Heart left ventricle (tissue), 16 donors: ENCODE measurements at regions of chr1 and their contacts with region 1.

Region 1: DNA sequence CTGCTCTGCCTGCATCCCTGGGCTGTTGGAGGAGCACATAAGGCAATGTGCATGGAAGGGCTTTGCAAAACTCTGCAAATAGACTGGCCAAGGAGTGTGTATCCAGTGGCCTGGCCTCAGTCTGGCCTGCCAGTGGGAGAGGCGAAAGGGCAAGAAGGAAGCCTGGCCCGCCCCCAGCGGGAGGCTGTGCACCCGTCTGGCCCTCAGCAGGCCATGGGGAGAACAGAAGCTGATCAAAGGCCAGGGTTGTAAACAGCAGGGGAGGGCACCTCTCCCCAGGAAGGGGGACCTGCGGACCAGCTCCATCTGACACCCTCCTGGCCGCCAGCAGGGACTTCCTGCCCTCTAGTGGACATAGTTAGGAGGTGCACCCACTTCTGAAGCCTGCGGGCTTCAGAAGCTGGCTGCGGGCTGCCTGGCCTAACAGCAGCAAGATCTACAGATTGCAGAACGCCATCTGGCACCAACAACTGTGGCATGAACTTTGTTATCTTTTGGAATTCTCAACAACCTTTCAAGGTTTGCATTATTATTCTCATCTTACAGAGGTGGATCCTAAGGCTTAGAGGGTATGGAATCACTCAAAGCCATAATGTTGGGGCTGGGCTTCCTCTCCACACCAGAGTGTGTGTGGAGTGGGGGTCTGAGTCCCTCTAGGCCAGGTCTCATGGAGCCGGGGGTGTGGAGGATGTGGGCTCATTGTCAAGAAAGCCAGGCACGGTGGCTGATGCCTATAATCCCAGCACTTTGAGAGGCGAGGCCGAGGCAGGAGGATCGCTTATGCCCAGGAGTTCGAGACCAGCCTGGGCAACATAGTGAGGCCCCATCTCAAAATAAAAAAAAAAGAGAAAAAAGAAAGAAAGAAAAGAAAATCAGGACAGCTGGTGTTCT is 18.9 kb upstream of the CDK18 start:
- DNase-seq: peak; percentile 42 to 73 (median 59)
- ATAC-seq: peak; percentile 63 to 76 (median 73)
- H3K4me3 ChIP-seq: no peak overlapping the region
- H3K27ac ChIP-seq: no peak overlapping the region
- H3K4me1 ChIP-seq: peaks cover 0 to 5% (median 0%) of the 10 kb centered on the region in 12 donors
- H3K27me3 ChIP-seq: peaks cover 0 to 30% (median 10%) of the 10 kb centered on the region in 9 donors
- CTCF ChIP-seq: peak; percentile 93 to 99 (median 97)
- POLR2A ChIP-seq: no peak

Region 2: GRCh38 chr1:205273551-205273982 is 212.0 kb before region 1 on chr1:
- intact Hi-C with region 1: loop called in 1 of 10 experiments (anchors 10 kb)
- DNase-seq: peak; percentile 75 to 90 (median 80)
- ATAC-seq: peak; percentile 70 to 87 (median 78)
- H3K4me3 ChIP-seq: no peak overlapping the region
- H3K27ac ChIP-seq: no peak overlapping the region
- H3K4me1 ChIP-seq: peaks cover 0 to 33% (median 11%) of the 10 kb centered on the region in 12 donors
- H3K27me3 ChIP-seq: no peaks in the 10 kb centered on the region
- CTCF ChIP-seq: peak; percentile 93 to 99 (median 99)
- POLR2A ChIP-seq: no peak

Region 3: DNA sequence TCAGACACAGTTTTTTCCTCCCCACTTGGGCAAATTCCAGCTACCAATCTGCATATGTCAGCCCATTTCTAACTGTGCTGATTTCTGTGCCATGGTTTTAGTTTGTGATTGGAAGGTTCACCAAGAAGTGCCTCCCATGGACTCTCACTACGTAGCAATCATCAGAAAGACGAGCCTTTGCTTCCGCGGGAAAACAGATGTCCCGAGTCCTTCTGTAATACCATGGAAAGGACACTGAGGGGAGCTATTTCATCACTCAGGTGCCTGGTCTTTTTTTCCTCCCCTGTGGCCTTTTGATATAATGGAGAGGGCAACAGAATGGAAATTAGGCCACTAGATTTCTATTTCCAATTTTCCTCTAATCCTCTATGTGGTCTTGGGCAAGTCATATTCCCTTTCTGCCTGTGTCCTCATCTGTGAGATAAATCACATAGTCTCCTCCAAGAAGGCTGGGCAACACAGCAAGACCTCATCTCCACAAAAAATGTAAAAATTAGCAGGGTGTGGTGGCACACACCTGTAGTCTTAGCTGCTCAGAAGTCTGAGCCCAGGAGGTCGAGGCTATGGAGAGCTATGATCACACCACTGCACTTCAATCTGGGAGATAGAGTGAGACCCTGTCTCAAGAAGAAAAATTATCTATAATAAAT is 88.5 kb before region 1 on chr1:
- intact Hi-C with region 1: loop called (anchors 1 to 2 kb)
- DNase-seq: peak in 1 of 5 donors; percentile 15
- ATAC-seq: peak in 3 of 4 donors; percentile 48 to 78 (median 59)
- H3K4me3 ChIP-seq: no peak overlapping the region
- H3K27ac ChIP-seq: no peak overlapping the region
- H3K4me1 ChIP-seq: no peaks in the 10 kb centered on the region
- H3K27me3 ChIP-seq: peaks cover 0 to 15% (median 0%) of the 10 kb centered on the region in 9 donors
- CTCF ChIP-seq: peak; percentile 59 to 83 (median 76)
- POLR2A ChIP-seq: no peak

Region 4: DNA sequence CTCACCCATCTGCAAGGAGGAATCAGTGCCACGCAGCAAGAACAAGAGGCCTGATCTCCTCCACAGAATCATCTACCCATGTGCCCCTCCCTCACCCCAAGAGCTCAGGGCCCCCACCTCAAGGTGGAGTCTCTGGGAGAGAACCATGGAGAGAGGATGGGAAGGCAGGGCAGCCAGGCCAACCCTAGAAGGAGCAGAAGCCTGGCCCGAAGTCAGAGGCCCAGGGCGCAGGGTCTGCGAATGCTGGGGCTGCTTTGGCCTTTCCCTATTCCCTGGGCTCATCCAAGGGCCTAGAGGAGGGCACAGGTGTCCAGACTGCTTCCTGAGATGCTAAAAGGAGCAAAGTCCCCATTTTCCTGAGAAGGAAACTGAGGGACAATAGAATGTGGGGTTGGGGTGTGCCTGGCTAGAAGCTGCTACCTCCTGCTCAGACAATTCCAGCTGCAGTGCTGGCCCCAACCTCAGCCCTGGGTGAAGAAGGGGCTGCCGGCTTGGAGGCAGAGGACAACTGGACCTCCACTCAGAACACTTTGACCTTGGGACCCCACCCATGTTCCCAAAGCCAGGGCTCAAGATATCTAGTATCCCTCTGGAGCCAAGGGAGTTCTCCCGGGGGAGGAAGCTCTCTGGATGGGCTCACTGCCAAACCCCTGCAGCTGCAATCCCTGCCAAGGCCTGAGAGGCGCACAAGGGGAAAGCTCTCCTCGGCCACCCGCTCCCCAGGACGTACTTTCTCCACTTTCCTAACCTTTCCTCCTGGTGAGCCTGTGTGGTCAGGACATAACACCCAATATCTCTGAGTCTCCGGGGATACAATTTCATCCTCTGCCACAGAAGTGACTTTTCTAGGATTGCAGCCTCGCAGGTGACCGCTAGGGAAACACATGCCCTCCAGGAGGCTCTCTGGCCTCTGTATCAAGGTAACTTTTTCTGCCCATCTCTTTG is 47.1 kb before region 1 on chr1:
- intact Hi-C with region 1: loop called in 7 of 10 experiments (anchors 5 to 10 kb)
- DNase-seq: peak; percentile 87 to 90 (median 87)
- ATAC-seq: peak; percentile 72 to 91 (median 84)
- H3K4me3 ChIP-seq: peak overlapping the region in 2 of 12 donors; percentile 6 to 11
- H3K27ac ChIP-seq: peak overlapping the region in 9 of 12 donors; percentile 34 to 72 (median 55)
- H3K4me1 ChIP-seq: peaks cover 7 to 53% (median 42%) of the 10 kb centered on the region in 12 donors
- H3K27me3 ChIP-seq: no peaks in the 10 kb centered on the region
- CTCF ChIP-seq: peak; percentile 46 to 84 (median 69)
- POLR2A ChIP-seq: no peak

Region 5: DNA sequence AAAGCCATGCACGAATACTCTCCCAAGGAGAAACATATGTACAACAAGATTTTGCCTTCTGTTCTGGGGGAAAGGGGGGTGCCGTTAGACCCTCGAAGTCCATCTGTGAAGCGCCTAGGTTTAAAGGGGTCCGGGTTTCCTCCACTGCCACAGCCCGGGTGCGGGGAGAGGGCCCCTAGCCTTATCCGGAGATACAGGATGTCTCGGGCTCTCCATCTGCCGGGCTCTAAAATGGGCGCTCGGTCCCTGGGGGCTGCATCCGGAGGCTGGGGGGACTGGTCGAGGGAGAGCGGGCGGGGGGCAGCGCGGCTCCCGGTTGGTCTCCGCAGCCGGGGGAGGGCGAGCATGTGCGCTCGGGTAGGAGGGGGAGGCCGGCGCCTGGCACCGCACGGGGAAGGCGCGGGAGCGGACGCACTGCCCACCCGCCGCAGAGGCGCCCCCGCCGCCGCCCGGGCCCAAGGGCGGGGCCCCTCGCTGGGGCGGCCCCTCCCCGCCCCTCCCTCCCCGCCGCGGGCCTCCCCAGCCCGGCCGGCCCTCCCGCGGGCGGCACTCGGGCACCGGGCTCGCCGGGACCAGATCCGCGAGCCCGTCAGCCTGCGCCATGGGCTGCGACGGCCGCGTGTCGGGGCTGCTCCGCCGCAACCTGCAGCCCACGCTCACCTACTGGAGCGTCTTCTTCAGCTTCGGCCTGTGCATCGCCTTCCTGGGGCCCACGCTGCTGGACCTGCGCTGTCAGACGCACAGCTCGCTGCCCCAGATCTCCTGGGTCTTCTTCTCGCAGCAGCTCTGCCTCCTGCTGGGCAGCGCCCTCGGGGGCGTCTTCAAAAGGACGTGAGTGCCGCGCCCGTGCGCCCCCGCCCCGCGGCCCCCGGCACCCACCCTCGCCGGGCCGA is 83.1 kb after region 1 on chr1:
- intact Hi-C with region 1: loop called in 1 of 10 experiments (anchors 5 kb)
- DNase-seq: peak in 1 of 5 donors; percentile 24
- ATAC-seq: peak in 3 of 4 donors; percentile 23 to 30 (median 27)
- H3K4me3 ChIP-seq: peak overlapping the region in 11 of 12 donors; percentile 22 to 62 (median 47)
- H3K27ac ChIP-seq: peak overlapping the region in 2 of 12 donors; percentile 31 to 34
- H3K4me1 ChIP-seq: peaks cover 0 to 17% (median 0%) of the 10 kb centered on the region in 12 donors
- H3K27me3 ChIP-seq: peaks cover 4 to 38% (median 15%) of the 10 kb centered on the region in 9 donors
- CTCF ChIP-seq: peak in 6 of 12 donors; percentile 16 to 37 (median 29)
- POLR2A ChIP-seq: no peak

Region 6: DNA sequence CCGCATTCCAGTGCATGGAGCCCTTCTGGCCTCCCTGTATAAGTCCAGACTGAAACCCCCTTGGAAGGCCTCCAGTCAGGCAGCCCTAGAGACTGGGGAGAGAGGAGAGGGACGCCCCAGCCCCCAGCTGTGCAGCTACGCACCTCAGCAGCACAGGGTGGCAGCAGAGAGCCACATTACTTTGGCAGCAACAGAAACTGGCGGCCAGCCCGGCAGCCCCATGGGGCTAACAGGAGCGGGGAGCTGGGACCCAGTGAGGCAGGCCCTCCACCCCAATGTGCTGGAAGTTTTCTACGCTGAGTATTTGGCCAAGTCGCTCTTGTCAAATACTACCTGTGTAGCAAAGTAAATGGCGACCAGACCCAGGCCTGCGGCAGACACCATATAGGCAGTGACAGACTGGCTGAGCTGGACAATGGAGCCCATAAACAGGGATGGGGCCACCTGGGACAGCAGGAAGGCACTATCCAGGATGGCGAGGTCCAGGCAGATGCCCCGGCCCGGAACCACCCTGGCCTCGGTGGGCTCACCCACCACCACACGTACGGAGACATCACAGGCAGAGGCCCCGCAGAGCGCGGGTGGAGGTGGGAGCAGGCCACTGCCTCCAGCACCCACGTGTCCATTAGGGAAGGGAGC is 173.5 kb after region 1 on chr1:
- intact Hi-C with region 1: loop called in 1 of 10 experiments (anchors 2 kb)
- DNase-seq: peak; percentile 78 to 90 (median 83)
- ATAC-seq: peak; percentile 71 to 88 (median 80)
- H3K4me3 ChIP-seq: no peak overlapping the region
- H3K27ac ChIP-seq: no peak overlapping the region
- H3K4me1 ChIP-seq: peaks cover 0 to 16% (median 6%) of the 10 kb centered on the region in 12 donors
- H3K27me3 ChIP-seq: no peaks in the 10 kb centered on the region
- CTCF ChIP-seq: peak; percentile 77 to 91 (median 85)
- POLR2A ChIP-seq: no peak